GM10248 (cell line): ENCODE measurements at regions of chr10 and their contacts with region 1.

Region 1: GRCh38 chr10:101840741-101841453 is 2.7 kb downstream of the KCNIP2 start:
- DNase-seq: peak; percentile 89
- CTCF ChIP-seq: peak; percentile 97

Region 2: DNA sequence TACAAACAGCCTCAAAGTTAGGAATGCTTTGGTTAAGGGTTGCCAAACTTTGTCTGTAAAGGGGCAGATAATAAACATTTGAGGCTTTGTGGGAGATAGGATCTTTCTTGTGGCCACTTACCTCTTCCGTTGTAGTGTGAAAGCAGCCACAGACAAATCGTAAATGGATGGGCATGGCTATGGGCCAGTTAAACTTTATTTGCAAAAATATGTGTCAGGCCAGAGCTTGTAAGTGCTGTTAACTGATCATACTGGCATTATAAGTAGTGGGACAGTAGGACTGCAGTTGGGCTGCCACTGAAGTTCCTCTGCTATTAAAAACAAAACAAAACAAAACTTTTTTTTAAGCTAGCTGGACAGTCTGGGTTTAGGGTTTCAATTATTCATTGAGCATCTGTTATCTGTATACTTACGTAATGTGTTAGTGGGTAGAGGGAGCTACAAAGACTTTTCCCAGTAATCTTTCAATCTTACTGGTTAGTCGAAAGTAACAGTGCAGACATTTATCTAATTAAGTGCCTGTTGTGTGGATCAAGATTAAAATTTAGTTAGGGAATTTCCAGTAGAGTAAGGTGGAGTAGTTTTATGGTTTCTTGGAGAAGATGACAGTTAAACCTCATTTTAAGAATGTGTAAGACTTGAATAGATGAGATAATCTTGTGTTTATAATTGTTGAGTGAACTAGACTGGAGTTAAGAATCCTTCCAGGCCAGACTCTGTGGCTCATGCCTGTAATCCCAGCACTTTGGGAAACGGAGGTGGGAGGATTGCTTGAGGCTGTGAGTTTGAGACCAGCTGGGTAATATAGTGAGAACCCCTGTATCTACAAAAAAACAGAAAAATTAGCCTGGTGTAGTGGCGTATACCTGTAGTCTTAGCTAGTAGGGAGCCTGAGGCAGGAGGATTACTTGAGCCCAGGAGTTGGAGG is 386.8 kb before region 1 on chr10:
- CTCF ChIA-PET with region 1: no interaction called
- POLR2A ChIA-PET with region 1: no interaction called
- DNase-seq: no peak
- CTCF ChIP-seq: no peak

Region 3: GRCh38 chr10:101693978-101694673 is 146.8 kb before region 1 on chr10:
- CTCF ChIA-PET with region 1: no interaction called
- POLR2A ChIA-PET with region 1: no interaction called
- DNase-seq: peak; percentile 78
- CTCF ChIP-seq: no peak

Region 4: DNA sequence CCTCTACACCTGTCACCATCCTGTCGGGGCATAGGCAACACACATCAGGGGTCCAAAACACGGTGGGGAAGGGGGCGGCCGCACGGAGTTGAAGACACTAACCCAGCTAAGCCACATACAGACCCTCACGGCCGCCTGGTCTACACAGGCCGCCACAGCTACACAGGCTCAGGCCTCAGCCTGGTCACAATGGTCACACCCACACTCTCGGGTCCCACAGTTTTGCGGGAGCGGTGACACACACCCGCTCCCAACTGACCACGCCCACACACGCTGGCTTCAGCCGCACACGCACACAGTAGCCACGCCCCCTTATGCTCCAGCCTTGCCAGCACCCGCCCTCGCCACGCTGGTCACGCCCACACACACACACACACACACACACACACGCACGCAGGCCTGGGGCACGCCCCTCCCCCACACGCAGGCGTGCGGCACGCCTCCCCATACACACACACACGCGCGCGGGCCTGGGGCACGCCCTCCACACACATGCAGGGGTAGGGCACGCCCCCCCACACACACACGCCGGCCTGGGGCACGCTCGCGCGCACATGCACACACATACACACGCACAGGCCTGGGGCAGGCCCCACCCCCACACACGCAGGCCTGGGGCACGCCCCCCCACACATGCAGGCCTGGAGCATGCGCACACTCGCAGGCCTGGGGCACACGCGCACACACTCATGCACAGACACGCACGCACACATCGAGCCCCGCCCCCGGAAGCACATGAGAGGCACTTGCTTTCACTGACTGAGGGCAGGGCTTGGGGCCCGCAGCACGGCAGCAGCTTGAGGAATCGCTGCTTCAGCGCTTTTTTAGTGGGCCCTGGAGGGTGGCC is 10.4 kb before region 1 on chr10:
- CTCF ChIA-PET with region 1: interaction called, 66 read pairs
- POLR2A ChIA-PET with region 1: no interaction called
- DNase-seq: peak; percentile 88
- CTCF ChIP-seq: no peak

Region 5: DNA sequence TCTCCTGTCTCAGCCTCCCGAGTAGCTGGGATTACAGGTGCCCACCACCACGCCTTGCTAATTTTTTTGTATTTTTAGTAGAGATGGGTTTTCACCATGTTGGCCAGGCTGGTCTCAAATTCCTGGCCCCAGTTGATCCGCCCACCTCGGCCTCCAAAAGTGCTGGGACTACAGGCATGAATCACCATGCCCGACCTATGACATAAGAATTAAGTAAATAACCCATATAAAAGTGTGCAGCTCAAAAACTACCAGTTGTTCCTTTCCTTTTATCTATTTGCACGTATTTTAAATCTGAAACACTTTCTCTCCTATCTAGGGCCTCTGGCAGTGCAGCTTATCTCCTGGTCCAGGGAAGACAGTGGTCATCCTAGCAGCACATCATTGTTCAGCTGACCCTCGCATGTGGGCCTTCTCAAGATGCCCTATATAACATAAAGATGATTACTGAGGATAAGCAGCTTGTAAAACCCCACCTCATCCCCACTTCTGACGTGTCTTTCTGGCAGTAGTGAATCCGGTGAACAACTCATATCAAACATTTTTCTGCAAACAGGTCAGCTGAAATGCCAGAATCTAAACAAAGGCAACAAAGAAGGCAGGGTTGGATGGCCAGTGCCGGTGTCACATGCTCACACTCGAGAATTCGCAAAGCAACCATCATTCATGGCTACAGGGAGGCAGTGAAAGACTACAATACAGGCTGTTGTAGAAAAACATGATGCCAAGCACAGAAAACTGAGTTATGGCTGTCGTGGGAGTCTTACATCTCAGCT is 38.7 kb after region 1 on chr10:
- CTCF ChIA-PET with region 1: interaction called, 32 read pairs
- POLR2A ChIA-PET with region 1: no interaction called
- DNase-seq: no peak
- CTCF ChIP-seq: no peak

Region 6: DNA sequence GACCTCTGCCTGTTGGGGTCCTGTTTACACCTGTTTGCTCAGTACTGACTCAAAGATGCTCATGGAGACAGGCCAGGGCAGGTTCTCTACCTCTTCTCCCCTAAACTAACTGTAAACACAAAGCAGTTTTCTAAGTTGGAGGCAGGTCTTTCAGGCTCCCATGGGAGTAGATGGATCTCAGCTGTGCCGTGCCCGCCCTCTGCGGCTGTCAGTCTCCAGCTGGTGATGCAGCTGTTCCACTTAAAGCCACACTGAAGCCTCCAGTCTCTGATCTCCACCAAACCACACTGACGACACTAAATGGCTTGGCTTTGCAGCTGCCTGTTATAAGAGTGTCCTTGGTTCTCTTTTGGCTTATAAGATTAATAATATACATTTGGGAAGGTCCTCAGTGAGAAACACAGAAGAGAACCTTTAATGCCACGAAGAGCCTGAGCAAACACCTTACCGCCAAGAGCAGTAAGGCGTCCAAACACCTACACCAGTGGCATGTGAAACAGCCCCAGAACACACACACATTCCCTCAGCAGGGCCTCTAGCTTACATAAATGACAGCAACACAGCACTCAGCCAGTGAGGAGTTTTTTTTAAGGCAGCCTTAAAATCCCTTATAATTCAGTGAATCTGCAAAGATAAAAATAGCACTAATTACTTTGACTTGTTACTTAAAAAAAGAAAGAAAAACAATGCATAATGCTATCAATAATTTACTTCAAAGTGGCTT is 63.1 kb after region 1 on chr10:
- CTCF ChIA-PET with region 1: interaction called, 33 read pairs
- POLR2A ChIA-PET with region 1: no interaction called
- DNase-seq: peak; percentile 67
- CTCF ChIP-seq: no peak

Region 7: GRCh38 chr10:101986625-101986973 is 145.7 kb after region 1 on chr10:
- CTCF ChIA-PET with region 1: interaction called, 10 read pairs
- POLR2A ChIA-PET with region 1: no interaction called
- DNase-seq: no peak
- CTCF ChIP-seq: no peak

Region 8: GRCh38 chr10:102055647-102056419 is 214.9 kb after region 1 on chr10 and contains the start of gene ARMH3:
- CTCF ChIA-PET with region 1: interaction called, 24 read pairs
- POLR2A ChIA-PET with region 1: interaction called, 4 read pairs
- DNase-seq: peak; percentile 98
- CTCF ChIP-seq: no peak